ENCODE measurements at regions of chr16 and their contacts with region 1.

Region 1: DNA sequence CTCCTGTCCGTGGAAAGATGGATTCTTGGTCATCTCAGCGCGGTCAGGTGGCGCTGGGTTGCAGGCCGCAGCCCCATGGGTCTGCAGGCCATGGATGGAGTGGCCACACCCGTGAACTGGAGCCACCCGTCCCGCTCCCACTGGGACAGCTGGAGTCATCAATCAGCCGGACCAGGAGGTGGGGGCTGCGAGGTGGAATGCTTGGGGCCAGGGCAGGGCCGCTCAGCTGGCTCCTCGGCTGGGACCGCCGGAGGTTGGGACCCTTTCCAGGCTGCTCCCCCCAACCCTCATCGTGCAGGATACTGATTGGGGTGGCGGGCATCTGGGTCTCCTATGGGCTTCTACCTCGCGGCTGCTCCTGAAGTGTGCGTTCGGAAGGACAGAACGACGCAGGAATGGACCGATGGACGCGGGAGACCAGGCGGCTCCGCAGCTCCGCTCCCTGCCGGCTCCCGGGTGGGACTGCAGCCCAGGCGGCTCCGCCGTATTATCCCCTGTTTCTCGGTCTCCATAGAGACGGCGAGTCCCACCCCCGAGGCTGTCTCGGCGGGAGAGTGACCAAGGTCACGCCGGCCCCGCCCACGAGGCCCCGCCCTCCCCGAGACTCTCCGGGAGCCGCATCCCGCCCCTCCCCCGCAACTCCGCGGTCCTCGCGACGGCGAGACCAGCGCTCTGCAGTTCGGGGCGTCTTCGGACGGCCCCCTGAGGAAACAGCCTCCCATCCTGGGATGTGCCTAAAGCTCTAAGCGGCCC is at the start of gene TPPP3:
- DNase-seq: peak; percentile 94 to 97 (median 96)
- ATAC-seq: peak; percentile 94
- H3K4me3 ChIP-seq: no peak within 1 kb of the TSS
- H3K27ac ChIP-seq: no peak within 1 kb of the TSS
- H3K4me1 ChIP-seq: peaks cover 19 to 78% of the 10 kb centered on the region in 2 experiments
- H3K27me3 ChIP-seq: peaks cover 5 to 44% of the 10 kb centered on the region in 2 experiments; a peak in 4 of 5 replicates
- CTCF ChIP-seq: peak; percentile 57 to 84 (median 74)
- EP300 ChIP-seq: no peak
- POLR2A ChIP-seq: no peak
- RAD21 ChIP-seq: peak; percentile 39 to 62
- polyA plus RNA-seq, gene TPPP3: 0.13 TPM in 1 of 2 experiments, not detected in the other

Region 2: DNA sequence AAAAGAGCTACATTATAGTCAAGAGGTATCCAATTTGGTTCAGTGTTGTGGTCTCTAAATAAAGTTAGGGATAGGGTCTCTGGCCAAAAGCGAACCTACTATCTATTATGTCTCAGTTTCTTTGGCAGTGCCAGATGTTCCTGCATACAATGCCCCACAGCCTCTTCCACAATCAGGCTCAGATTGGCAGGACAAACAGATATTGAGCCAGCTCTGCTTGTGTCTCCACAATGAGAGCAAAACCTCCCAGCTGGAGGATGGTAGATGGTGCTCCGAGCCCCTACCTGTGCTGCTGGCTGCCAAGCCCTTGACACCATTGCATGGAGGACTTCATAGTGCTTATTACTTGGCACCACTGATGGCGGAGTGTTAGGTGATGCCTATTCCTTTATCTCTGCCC is 263.8 kb before region 1 on chr16:
- CTCF ChIA-PET with region 1: no interaction called
- POLR2A ChIA-PET with region 1: no interaction called
- in situ Hi-C with region 1: no loop called
- intact Hi-C with region 1: no loop called
- DNase-seq: no peak
- ATAC-seq: no peak
- H3K4me3 ChIP-seq: no peak overlapping the region
- H3K27ac ChIP-seq: no peak overlapping the region
- H3K4me1 ChIP-seq: no peaks in the 10 kb centered on the region
- H3K27me3 ChIP-seq: no peaks in the 10 kb centered on the region
- CTCF ChIP-seq: no peak
- EP300 ChIP-seq: no peak
- POLR2A ChIP-seq: no peak
- RAD21 ChIP-seq: no peak

Region 3: GRCh38 chr16:67349172-67349571 is 44.0 kb before region 1 on chr16:
- CTCF ChIA-PET with region 1: no interaction called
- POLR2A ChIA-PET with region 1: interaction called, 3 read pairs
- in situ Hi-C with region 1: no loop called
- intact Hi-C with region 1: loop called (anchors 10 kb)
- DNase-seq: peak in 3 of 4 experiments; percentile 26 to 38 (median 35)
- ATAC-seq: peak; percentile 68
- H3K4me3 ChIP-seq: no peak overlapping the region
- H3K27ac ChIP-seq: no peak overlapping the region
- H3K4me1 ChIP-seq: no peaks in the 10 kb centered on the region
- H3K27me3 ChIP-seq: peaks cover 6 to 9% of the 10 kb centered on the region in 2 experiments; a peak in 3 of 5 replicates
- CTCF ChIP-seq: peak; percentile 32 to 55 (median 33); a peak in 4 of 6 replicates
- EP300 ChIP-seq: no peak
- POLR2A ChIP-seq: no peak
- RAD21 ChIP-seq: peak in 1 of 2 experiments; percentile 38; a peak in 2 of 4 replicates